ENCODE measurements at regions of chr18 and their contacts with region 1.

Region 1: GRCh38 chr18:74896390-74896991 is 298.8 kb downstream of the ZNF407 start:
- DNase-seq: peak; percentile 67
- H3K4me3 Mint-ChIP-seq: no peak overlapping the region
- H3K27ac Mint-ChIP-seq: no peak overlapping the region
- H3K4me1 Mint-ChIP-seq: peaks cover 2% of the 10 kb centered on the region
- H3K27me3 Mint-ChIP-seq: no peaks in the 10 kb centered on the region

Region 2: DNA sequence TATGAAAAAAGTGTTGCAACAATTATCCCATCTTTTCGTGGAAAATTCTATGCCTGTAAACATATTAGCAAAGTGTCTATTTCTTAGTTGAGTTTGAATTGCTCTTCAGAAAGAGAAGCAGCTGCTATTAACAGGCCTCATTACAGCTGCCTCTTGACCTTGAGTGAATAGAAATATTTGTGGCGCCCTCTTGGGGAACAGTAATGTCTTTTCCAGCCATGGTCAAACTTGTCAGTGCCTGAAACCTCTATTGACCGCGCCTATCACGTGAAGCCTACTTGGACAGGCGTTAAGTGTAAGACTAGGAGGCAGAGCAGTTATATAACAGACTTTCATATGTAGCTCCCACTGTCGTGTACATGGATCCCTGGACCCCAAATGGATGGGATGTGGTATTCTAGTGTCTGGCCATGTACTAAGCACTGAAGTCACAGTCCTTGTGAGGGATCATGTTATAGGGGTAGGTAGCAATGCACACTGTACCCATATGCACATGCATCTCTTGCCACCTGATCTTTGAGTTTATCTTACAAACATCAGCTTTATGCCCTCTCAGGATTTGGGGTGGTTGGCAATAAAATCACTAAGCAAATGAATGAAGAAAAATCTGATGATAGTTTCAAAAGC is 67.4 kb after region 1 on chr18:
- CTCF ChIA-PET with region 1: no interaction called
- intact Hi-C with region 1: loop called (anchors 5 kb)
- DNase-seq: peak; percentile 12
- H3K4me3 Mint-ChIP-seq: no peak overlapping the region
- H3K27ac Mint-ChIP-seq: no peak overlapping the region
- H3K4me1 Mint-ChIP-seq: no peaks in the 10 kb centered on the region
- H3K27me3 Mint-ChIP-seq: no peaks in the 10 kb centered on the region

Region 3: DNA sequence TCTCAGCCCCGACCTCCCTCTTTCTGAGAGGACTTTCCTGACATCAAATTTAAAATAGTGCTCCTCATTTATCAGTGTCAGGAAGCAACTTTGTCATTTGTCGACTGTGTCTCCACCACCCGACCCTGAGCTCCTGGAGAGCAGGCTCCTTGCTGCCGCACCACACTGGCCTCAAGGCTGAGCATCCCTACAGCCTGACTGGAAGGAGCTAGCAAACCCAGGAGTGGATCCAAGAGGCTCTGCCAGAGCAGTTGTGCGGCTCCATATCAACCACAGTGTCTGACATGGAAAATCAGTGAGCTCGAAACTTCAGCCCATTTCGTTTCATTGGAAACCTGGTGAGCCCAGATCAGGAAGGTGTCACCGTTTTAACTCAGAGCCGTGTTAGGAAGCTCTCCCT is 187.3 kb after region 1 on chr18:
- CTCF ChIA-PET with region 1: no interaction called
- intact Hi-C with region 1: loop called (anchors 1 kb)
- DNase-seq: no peak
- H3K4me3 Mint-ChIP-seq: no peak overlapping the region
- H3K27ac Mint-ChIP-seq: no peak overlapping the region
- H3K4me1 Mint-ChIP-seq: no peaks in the 10 kb centered on the region
- H3K27me3 Mint-ChIP-seq: no peaks in the 10 kb centered on the region

Region 4: DNA sequence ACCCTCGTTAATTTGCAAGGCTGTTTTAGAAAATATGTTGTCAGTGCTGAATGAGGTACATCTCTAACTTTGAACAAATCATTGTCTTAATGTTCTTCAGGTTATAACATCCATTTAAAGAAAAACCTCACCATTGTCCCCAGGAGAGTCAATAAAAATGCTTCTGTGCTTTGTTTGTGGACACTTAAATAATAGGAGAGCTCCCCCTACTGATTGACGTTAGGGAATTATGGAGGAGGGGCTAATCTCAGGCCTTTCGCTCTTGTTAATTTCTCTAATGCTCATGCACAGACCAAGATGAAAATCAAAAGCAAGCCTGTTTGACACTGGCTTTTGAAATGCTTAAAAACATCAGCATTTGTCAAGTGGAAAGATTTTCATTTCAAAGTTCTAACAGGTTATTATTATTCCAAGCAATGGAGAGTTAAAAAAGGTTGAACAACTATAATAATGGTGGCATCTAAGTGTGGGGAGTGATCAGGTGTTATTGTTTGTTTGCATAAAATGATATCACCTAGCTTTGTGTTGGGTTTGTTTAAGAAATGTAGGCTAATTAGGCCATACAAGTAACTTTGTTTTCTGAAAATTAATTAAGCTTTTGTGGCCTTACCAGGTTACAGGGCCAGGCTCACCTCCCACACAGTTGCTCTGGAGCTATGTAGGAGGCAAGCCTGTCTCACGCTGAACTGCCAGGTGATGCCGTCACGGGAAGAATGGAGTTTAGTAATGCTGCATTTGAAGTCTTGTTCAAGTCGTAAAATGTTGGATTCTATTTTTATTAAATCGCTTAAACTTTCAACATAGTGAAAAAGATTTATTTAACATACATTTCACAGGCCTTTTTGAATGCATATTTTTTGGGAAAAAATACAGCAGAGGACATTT is 582.7 kb after region 1 on chr18:
- CTCF ChIA-PET with region 1: no interaction called
- intact Hi-C with region 1: loop called (anchors 1 kb)
- DNase-seq: no peak
- H3K4me3 Mint-ChIP-seq: no peak overlapping the region
- H3K27ac Mint-ChIP-seq: no peak overlapping the region
- H3K4me1 Mint-ChIP-seq: peaks cover 5% of the 10 kb centered on the region
- H3K27me3 Mint-ChIP-seq: peaks cover 16% of the 10 kb centered on the region

Region 5: GRCh38 chr18:76349067-76349715 is 1452.7 kb after region 1 on chr18:
- CTCF ChIA-PET with region 1: no interaction called
- intact Hi-C with region 1: loop called (anchors 2 kb)
- DNase-seq: peak; percentile 80
- H3K4me3 Mint-ChIP-seq: no peak overlapping the region
- H3K27ac Mint-ChIP-seq: no peak overlapping the region
- H3K4me1 Mint-ChIP-seq: peaks cover 9% of the 10 kb centered on the region
- H3K27me3 Mint-ChIP-seq: peaks cover 7% of the 10 kb centered on the region

Measured in activated naive CD4-positive, alpha-beta T cell treated with anti-CD3 and anti-CD28 coated beads for 36 hours (primary cell).